ENCODE measurements at regions of chr1 and their contacts with region 1.

Region 1: DNA sequence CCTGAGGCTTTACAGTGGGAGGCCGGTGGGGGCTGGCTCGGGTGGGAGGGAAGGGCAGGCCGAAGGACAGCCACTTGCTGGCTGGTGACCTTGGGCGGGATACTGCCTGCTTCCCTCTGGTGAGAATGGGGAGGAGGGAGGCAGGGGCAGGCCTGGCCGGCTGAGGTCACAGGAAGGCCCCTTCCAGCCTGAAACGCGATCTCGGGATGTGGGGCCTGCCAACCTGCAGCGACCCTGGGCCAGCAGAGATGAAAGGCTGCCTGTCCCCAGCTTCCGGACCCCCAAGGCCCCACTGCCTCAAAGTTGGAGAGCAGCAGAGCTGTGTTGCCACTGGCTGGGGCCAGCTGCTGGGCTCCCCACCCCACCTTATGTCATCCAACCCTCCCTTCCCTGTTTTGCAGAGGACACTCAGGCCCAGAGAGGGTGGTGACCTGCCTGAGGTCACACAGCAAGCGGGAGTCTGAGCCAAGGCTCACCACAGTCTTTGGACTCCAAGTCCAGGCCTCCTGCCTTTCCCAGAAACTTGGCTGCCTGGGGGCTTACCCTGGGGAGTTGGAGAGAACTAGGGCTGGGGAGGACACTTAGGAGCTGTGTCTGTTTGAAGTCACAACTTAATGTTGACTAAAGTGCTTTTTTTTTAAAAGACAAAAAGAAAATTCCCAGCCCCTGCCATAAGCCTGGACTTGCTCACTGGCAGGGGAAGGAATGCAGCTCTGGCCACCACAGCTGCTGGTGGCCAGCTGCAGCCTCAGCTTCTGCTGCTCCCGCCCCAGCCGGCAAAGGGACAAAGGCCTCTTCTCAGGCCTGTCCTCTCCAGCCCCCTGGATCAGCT is 14.8 kb upstream of the WASF2 start:
- DNase-seq: peak; percentile 94
- H3K4me3 ChIP-seq: no peak overlapping the region
- H3K27ac ChIP-seq: peak overlapping the region; percentile 77 to 92
- H3K4me1 ChIP-seq: peaks cover 29% of the 10 kb centered on the region
- H3K27me3 ChIP-seq: no peaks in the 10 kb centered on the region
- CTCF ChIP-seq: no peak
- POLR2A ChIP-seq: no peak

Region 2: GRCh38 chr1:27416387-27417111 is 88.3 kb before region 1 on chr1:
- intact Hi-C with region 1: loop called (anchors 10 kb)
- DNase-seq: peak; percentile 67
- H3K4me3 ChIP-seq: no peak overlapping the region
- H3K27ac ChIP-seq: no peak overlapping the region
- H3K4me1 ChIP-seq: peaks cover 20% of the 10 kb centered on the region
- H3K27me3 ChIP-seq: no peaks in the 10 kb centered on the region
- CTCF ChIP-seq: peak; percentile 38 to 76 (median 51)
- POLR2A ChIP-seq: no peak

Measured in testis (tissue), 5 donors.